Heart right ventricle (tissue), 16 donors: ENCODE measurements at regions of chr4 and their contacts with region 1.

Region 1: GRCh38 chr4:112968451-112969159 is 80.8 kb upstream of the ANK2 start:
- DNase-seq: no peak
- ATAC-seq: no peak
- H3K4me3 ChIP-seq: no peak overlapping the region
- H3K27ac ChIP-seq: no peak overlapping the region
- H3K4me1 ChIP-seq: no peaks in the 10 kb centered on the region
- H3K27me3 ChIP-seq: no peaks in the 10 kb centered on the region
- CTCF ChIP-seq: no peak

Region 2: DNA sequence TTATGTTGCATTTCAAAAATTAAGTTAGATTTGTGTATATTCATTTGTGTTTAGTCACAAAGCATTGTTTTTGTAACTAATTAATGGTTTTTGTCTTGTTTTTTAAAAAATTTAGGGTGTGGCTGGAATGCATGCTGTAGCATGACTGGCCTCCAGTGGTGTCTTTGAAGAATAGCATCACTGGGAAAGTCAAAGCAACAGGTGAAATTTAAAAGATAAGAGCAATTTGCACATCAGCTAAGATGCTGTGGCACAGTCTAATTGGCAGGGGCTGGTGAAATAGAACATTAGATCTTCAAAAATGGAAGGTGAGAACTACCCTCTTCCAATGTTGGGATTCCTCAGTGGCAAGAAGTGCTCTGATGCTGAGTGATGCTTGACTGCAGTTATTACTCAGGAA is 126.2 kb after region 1 on chr4:
- intact Hi-C with region 1: loop called in 2 of 10 experiments (anchors 10 kb)
- DNase-seq: no peak
- ATAC-seq: no peak
- H3K4me3 ChIP-seq: no peak overlapping the region
- H3K27ac ChIP-seq: no peak overlapping the region
- H3K4me1 ChIP-seq: no peaks in the 10 kb centered on the region
- H3K27me3 ChIP-seq: no peaks in the 10 kb centered on the region
- CTCF ChIP-seq: peak; percentile 28 to 72 (median 56)

Region 3: DNA sequence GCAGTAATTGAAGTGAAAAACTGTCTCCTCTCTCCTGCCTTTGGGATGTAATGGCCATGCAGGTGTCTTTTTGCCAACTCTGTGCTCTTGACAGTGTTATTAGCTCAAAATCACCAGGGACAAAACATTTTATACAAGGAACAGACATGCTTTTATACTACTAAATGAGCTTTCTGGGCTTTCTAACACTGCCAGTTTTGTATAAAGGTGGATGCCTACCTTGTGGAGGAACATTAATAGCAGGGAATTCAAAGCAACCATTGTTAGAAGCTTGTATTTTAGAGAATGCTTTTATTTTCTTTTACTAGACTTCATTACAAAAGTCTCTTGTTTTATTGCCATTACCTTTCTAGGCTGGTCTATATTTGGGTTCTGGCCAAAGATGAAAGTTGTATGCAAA is 1065.6 kb after region 1 on chr4:
- intact Hi-C with region 1: loop called in 1 of 10 experiments (anchors 5 kb)
- DNase-seq: no peak
- ATAC-seq: no peak
- H3K4me3 ChIP-seq: no peak overlapping the region
- H3K27ac ChIP-seq: no peak overlapping the region
- H3K4me1 ChIP-seq: no peaks in the 10 kb centered on the region
- H3K27me3 ChIP-seq: peaks cover 0 to 6% (median 0%) of the 10 kb centered on the region in 7 donors
- CTCF ChIP-seq: no peak